Activated CD4-positive, alpha-beta T cell treated with anti-CD3 and anti-CD28 coated beads for 36 hours (primary cell): ENCODE measurements at regions of chr11 and their contacts with region 1.

Region 1: DNA sequence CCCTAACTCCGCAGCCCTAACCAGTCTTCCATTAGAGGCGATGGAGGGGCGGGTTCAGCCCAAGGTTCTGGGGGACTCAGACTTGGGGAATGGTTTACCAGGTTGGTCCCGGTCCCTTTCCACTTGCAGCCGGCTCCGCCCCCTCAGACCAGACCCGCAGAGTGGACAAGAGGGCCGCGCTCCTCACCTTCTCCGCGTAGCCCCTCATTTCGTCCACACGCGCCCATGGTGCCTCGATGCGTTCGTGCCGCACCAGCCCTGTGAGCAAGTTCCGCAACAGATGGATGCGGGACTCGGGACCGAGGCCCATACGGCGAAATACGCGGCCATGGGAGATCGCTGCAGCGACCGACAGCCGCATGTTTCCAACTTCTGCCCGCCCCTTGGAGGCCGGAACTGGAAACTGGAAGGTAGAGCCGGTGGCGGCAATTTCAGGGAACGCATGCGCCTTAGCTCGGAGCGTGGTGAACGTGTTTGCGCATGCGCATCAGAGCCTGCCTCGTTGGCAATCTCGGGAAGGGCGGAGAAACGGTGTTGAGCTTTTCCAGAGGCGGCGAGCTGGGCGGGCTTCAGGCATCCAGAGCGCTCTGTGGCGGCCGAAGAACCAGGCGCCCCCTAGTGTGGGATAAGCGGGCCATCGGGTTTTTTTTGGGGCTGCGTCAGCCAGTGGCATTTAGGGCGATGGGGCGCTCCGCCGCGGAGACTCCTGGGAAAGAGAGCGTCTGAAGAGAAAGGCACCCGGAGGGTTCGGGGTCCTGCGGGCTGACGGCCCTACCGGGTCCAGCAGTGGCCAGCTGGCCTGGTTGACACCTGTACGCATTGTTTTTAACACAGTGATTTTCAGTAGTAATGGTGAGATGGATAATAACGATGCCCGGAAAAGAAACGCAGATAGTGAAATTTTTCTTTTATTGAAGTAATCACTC is at the start of gene MRPL17:
- DNase-seq: peak; percentile 99
- ATAC-seq: peak; percentile 96
- H3K4me3 Mint-ChIP-seq: peak within 1 kb of the TSS; percentile 97
- H3K27ac Mint-ChIP-seq: peak within 1 kb of the TSS; percentile 100
- H3K4me1 Mint-ChIP-seq: peaks cover 29% of the 10 kb centered on the region
- H3K27me3 Mint-ChIP-seq: no peaks in the 10 kb centered on the region
- total RNA-seq, gene MRPL17: 118 to 156 TPM

Region 2: DNA sequence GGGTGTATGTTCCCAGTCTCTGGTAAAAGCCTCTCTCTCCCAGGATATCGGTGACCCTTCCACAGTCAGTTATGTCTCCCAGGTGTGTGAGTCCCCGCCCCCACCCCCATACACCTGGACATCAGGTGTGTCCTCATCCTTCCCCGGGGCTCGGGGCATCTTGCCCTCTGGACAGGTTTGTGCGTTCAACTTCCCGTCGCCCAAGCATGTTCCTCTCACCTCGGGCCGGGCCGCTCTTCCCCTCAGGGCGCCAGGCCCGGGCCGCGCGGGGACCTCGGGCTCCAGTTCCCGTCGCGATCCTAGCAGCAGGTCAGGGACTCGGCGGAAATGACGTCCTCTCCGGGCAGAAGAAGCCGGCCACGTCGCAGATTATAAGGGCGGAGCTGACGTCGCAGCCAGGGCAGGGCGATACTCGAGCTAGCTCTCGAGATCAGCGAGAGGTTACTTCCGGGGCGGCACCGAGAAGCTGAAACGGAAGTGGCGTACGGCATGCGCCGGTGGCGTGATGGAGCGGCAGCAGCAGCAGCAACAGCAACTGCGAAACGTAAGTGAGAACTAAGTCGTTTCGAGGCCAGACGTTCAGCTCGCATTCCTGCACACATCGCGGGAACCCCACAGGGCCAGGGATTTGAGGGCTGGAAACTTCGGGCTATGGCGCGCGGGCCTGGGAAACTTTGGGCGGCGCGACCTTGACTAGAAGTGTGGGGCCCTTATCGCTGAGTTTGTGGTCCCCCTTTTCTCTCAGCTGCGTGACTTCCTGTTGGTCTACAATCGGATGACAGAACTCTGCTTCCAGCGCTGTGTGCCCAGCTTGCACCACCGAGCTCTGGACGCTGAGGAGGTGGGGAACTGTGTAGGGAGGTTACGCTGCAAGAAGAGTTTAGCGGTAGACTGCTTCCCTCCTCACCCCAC is 201.9 kb before region 1 on chr11 and contains the starts of genes ARFIP2 and TIMM10B:
- CTCF ChIA-PET with region 1: interaction called, 4 read pairs
- POLR2A ChIA-PET with region 1: interaction called, 4 read pairs
- intact Hi-C with region 1: loop called (anchors 1 kb)
- DNase-seq: peak; percentile 99
- ATAC-seq: peak; percentile 98
- H3K4me3 Mint-ChIP-seq: peak within 1 kb of the TSS; percentile 80
- H3K27ac Mint-ChIP-seq: peak within 1 kb of the TSS; percentile 92
- H3K4me1 Mint-ChIP-seq: peaks cover 30% of the 10 kb centered on the region
- H3K27me3 Mint-ChIP-seq: no peaks in the 10 kb centered on the region
- total RNA-seq, gene ARFIP2: 36.7 to 40.3 TPM
- total RNA-seq, gene TIMM10B: 27.1 to 39.2 TPM

Region 3: DNA sequence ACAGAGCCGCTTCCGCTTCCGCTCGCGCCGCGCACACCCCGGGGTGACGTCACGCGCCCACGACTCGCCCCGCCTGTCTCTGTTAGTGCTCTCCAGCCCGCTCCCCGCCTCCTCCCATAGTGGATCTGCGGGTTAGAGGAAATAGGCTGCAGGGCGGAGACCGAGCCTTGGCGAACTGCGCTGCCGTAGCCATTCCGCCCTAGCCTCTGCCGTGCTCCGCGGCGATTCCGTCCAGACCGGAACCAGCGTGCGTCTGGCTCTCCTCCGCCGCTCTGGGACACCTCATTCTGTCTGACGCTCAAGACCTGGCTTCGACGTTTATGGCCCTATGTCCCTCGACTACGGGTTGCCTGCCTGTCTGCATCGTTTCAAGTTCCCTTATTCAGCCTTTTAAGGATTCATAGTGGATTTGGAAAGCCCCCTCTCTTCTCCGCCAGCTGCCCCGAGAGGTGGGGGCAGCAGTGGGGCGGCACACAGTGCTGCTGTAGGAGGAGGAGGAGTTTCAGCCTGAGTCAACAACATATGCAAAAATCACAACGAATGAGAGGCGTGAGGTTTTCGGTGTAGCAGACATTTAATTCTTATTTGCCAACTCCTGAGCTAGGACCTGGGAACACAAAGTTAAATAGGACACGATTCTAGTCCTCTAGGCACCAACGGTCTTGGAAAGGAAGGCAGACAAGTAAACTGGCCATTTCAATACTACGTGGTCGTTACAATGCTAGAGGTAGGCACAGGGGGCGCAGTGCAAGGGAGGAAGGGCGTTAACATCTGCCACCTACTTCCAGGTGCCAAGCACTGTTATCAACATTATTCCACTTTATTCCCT is 70.8 kb before region 1 on chr11 and contains the start of gene TAF10:
- CTCF ChIA-PET with region 1: interaction called, 13 read pairs
- POLR2A ChIA-PET with region 1: interaction called, 4 read pairs
- intact Hi-C with region 1: loop called (anchors 1 kb)
- DNase-seq: peak; percentile 97
- ATAC-seq: peak; percentile 85
- H3K4me3 Mint-ChIP-seq: no peak within 1 kb of the TSS
- H3K27ac Mint-ChIP-seq: peak within 1 kb of the TSS; percentile 93
- H3K4me1 Mint-ChIP-seq: peaks cover 44% of the 10 kb centered on the region
- H3K27me3 Mint-ChIP-seq: no peaks in the 10 kb centered on the region
- total RNA-seq, gene TAF10: 133 to 152 TPM

Region 4: DNA sequence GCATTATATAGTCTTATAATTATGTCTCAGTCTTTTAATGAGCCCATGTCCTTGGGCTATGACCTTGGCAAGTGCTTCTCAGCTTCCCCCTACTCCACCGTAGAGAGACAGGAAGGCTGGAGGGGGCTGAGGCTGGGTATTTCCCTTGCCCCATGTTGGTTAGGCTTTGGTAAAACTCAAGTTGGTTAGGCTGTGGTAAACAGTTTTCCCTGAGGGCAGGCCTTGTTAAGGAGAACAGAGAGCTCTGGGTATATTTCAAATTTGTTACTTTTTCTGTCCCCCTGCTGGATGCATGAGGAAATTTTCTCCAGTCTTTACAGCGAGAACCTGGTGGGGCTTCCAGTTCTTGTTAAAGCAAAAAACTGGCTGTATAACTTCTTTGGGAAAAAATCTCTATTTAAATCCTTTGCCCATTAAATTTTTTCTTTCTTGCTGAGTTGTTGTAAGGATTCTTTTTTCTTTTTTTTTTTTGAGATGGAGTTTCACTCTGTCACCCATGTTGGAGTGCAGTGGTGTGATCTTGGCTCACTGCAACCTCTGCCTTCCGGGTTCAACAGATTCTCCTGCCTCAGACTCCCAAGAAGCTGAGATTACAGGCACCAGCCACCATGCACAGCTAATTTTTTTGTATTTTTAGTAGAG is 15.3 kb before region 1 on chr11:
- CTCF ChIA-PET with region 1: interaction called, 18 read pairs
- POLR2A ChIA-PET with region 1: interaction called, 6 read pairs
- intact Hi-C with region 1: no loop called
- DNase-seq: peak; percentile 45
- ATAC-seq: peak; percentile 71
- H3K4me3 Mint-ChIP-seq: no peak overlapping the region
- H3K27ac Mint-ChIP-seq: no peak overlapping the region
- H3K4me1 Mint-ChIP-seq: peaks cover 51% of the 10 kb centered on the region
- H3K27me3 Mint-ChIP-seq: no peaks in the 10 kb centered on the region

Region 5: DNA sequence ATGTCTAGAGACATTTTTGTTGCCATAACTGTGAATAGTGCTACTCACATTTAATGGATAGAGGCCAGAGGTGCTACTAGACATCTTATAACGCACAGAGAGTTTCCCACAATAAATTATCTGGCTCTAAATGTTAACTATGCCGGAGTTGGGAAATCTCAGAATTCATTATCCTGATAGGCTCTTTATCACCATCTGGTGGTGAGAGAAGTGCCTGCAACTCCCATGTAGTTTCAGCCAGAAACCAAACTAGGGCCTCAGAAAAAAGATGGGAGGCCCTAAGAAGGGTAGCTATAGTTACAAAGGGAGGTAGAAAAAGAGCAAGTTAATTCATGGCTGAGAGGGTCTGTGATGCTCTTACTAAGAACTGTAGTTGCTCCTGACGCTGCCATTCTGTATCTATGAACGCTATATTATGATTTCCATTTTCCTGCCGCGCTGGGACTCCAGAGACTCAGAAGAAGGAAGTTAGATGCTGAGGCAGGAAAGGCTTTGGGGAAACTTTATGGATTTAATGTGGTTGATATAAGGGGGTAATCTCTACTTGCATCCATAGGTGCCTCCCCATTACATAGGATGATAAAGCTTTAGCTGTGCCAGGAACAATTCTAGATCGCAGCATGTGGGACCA is 22.8 kb after region 1 on chr11:
- CTCF ChIA-PET with region 1: interaction called, 12 read pairs
- POLR2A ChIA-PET with region 1: no interaction called
- intact Hi-C with region 1: no loop called
- DNase-seq: peak; percentile 59
- ATAC-seq: peak; percentile 75
- H3K4me3 Mint-ChIP-seq: no peak overlapping the region
- H3K27ac Mint-ChIP-seq: peak overlapping the region; percentile 23
- H3K4me1 Mint-ChIP-seq: peaks cover 18% of the 10 kb centered on the region
- H3K27me3 Mint-ChIP-seq: no peaks in the 10 kb centered on the region

Region 6: DNA sequence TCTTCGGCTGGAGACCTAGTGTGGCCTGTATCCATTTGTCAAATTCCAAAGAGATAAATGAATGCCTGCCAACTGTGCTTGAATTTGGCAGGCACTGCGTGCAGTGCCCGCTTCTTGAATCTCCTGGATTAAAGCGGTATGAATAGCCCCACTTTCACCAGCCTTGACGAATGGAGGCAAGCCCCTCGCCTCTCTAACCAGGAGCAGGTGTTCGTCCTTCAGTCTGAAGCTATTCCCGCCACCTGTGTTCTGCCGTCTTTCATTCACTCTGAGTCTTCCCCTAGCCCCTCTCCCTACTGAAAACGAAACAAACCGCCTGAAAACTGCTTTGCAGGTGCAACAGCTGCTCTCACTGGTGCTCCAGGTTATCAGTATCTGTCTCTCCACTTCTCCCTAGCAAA is 348.3 kb after region 1 on chr11:
- CTCF ChIA-PET with region 1: no interaction called
- POLR2A ChIA-PET with region 1: no interaction called
- intact Hi-C with region 1: no loop called
- DNase-seq: no peak
- ATAC-seq: no peak
- H3K4me3 Mint-ChIP-seq: no peak overlapping the region
- H3K27ac Mint-ChIP-seq: no peak overlapping the region
- H3K4me1 Mint-ChIP-seq: no peaks in the 10 kb centered on the region
- H3K27me3 Mint-ChIP-seq: peaks cover 2% of the 10 kb centered on the region